A673 (cell line): ENCODE measurements at regions of chr9 and their contacts with region 1.

Region 1: GRCh38 chr9:97615439-97616072 is 17.6 kb downstream of the TSTD2 start:
- DNase-seq: peak; percentile 74
- H3K4me3 ChIP-seq: no peak overlapping the region
- H3K27ac ChIP-seq: no peak overlapping the region
- H3K4me1 ChIP-seq: no peaks in the 10 kb centered on the region
- H3K27me3 ChIP-seq: no peaks in the 10 kb centered on the region
- CTCF ChIP-seq: peak; percentile 82

Region 2: DNA sequence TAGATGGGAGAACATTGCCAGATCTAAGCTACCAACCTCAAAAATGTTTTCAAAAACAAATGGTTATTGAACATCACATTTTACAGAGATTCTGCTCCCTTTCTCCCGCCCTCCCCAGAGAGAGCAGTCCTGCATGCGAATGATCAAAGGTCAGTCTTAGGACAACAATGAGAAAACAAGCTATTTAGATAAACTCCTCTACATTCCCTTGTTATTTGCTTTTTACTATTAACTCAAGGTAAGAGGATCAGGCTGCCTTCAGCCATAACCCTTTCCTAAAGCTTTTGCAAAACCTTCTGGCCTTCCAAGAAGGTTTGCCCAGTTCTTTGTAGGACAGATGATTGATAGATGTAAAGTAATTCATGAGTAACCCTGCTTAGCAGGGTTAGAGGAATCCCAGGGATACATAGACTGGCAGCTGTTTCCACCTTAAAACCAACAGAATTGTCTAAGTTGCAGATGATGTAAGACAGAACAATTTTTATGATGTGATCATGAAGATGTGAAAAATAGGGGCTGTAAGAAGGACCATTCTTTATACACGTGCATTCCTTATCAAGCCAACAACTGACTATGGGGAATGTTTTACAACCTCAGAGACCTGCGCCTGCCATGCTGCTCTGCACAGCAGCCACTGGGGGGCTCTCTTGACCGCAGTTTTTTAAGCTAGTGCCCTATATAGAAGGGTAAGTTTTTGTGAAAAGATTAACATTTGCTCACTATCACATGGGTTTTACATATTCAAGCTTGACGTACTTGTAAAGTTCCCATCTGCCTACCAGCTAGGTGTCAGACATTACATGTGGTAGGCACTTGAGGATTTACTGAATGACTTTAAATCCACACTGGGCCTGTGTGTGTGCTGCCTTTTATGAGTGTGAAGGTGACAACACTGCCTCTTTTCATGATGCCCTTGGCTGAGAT is 758.9 kb before region 1 on chr9:
- CTCF ChIA-PET with region 1: interaction called, 7 read pairs
- POLR2A ChIA-PET with region 1: no interaction called
- intact Hi-C with region 1: loop called (anchors 5 kb)
- DNase-seq: peak; percentile 83
- H3K4me3 ChIP-seq: no peak overlapping the region
- H3K27ac ChIP-seq: no peak overlapping the region
- H3K4me1 ChIP-seq: peaks cover 1% of the 10 kb centered on the region
- H3K27me3 ChIP-seq: no peaks in the 10 kb centered on the region
- CTCF ChIP-seq: peak; percentile 96

Region 3: GRCh38 chr9:97386733-97387503 is 228.6 kb before region 1 on chr9:
- CTCF ChIA-PET with region 1: no interaction called
- POLR2A ChIA-PET with region 1: no interaction called
- intact Hi-C with region 1: loop called (anchors 2 kb)
- DNase-seq: peak; percentile 58
- H3K4me3 ChIP-seq: no peak overlapping the region
- H3K27ac ChIP-seq: no peak overlapping the region
- H3K4me1 ChIP-seq: no peaks in the 10 kb centered on the region
- H3K27me3 ChIP-seq: no peaks in the 10 kb centered on the region
- CTCF ChIP-seq: peak; percentile 98

Region 4: GRCh38 chr9:97411789-97412625 is 203.5 kb before region 1 on chr9 and contains the start of gene TDRD7:
- CTCF ChIA-PET with region 1: interaction called, 4 read pairs
- POLR2A ChIA-PET with region 1: no interaction called
- intact Hi-C with region 1: loop called (anchors 1 kb)
- DNase-seq: peak; percentile 87
- H3K4me3 ChIP-seq: peak within 1 kb of the TSS; percentile 82
- H3K27ac ChIP-seq: no peak within 1 kb of the TSS
- H3K4me1 ChIP-seq: no peaks in the 10 kb centered on the region
- H3K27me3 ChIP-seq: peaks cover 5% of the 10 kb centered on the region
- CTCF ChIP-seq: peak; percentile 93
- total RNA-seq, gene TDRD7: 3.6 and 4.9 TPM in 2 replicates

Region 5: GRCh38 chr9:97468658-97469448 is 146.7 kb before region 1 on chr9:
- CTCF ChIA-PET with region 1: no interaction called
- POLR2A ChIA-PET with region 1: no interaction called
- intact Hi-C with region 1: loop called (anchors 1 kb)
- DNase-seq: peak; percentile 60
- H3K4me3 ChIP-seq: no peak overlapping the region
- H3K27ac ChIP-seq: no peak overlapping the region
- H3K4me1 ChIP-seq: no peaks in the 10 kb centered on the region
- H3K27me3 ChIP-seq: no peaks in the 10 kb centered on the region
- CTCF ChIP-seq: peak; percentile 67

Region 6: DNA sequence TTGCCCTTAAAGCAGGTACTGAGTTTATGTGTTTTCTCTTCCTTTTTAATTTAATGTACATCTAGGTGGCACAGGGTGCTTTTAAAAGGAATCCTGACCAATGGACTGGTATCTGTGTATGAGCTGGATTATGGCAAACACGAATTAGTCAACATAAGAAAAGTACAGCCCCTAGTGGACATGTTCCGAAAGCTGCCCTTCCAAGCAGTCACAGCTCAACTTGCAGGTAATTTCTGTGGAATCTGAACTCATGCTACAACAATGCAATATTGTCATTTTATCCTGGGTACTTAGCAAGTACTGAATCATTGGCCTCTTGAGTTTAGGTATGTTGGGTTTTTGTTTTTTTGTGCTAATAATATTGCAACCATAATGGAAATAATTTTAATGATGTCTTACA is 128.4 kb before region 1 on chr9:
- CTCF ChIA-PET with region 1: interaction called, 10 read pairs
- POLR2A ChIA-PET with region 1: no interaction called
- intact Hi-C with region 1: no loop called
- DNase-seq: peak; percentile 14
- H3K4me3 ChIP-seq: no peak overlapping the region
- H3K27ac ChIP-seq: no peak overlapping the region
- H3K4me1 ChIP-seq: no peaks in the 10 kb centered on the region
- H3K27me3 ChIP-seq: no peaks in the 10 kb centered on the region
- CTCF ChIP-seq: peak; percentile 50

Region 7: DNA sequence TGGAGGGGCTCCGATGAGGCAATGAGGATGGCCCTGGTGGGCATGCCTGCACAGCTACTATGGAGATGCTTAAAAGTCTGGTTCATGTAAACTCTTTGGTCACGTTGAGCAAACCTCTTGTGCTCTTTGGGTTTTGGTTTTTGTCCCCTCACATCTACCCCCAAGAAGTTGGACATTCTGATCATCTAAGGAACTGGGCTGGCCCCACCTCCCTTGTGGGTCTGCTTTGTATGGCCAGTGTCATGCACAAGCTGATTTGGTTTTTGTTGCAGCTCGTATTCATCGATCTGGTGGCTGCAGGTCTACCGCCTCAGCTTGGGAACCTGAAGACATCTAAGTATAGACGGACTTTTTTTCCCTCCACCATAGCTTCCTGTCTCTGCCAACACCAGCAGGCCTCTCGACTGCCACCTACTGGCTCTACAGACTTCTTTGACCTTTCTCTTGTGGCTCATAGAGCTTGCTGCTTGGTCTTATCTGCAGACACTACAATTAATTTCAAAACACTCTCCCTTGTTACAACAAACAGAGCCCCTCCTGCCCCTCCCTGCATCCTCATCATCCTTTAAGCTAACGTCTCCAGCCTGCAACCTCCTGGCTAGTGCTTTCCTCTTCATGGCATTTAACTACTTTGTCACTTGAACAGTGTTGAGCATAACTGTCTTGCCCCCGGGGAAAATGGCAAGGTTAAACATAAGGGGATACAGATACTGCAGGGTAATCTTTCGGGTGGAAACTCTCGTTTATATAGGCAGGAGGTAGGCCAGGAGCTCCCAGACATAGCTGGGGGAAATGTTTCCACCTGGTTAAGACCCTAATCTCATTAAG is 16.9 kb before region 1 on chr9:
- CTCF ChIA-PET with region 1: interaction called, 14 read pairs
- POLR2A ChIA-PET with region 1: no interaction called
- intact Hi-C with region 1: no loop called
- DNase-seq: peak; percentile 81
- H3K4me3 ChIP-seq: no peak overlapping the region
- H3K27ac ChIP-seq: no peak overlapping the region
- H3K4me1 ChIP-seq: no peaks in the 10 kb centered on the region
- H3K27me3 ChIP-seq: no peaks in the 10 kb centered on the region
- CTCF ChIP-seq: peak; percentile 87

Region 8: DNA sequence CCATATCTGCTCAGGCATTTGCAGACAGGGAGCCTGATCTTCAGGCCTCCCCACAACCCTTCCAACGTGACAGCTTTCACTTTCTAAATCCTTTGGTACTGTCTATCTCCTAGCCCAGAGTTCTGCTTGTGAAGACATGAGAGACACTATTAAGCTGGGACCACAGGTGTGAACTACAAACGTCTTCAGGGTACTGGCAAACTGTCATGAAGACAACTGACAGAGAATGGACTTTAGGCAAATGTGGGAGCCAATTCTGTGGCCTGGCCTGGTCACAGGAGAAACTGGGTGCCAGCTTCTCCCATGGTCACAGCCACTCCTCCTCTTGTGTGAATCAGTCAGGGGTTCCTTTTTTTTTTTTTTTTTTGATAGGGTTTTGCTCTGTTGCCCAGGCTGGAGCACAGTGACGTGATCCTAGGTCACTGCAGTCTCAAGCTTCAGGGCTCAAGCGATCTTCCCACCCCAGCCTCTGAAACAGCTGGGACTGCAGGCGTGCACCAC is 493.0 kb after region 1 on chr9:
- CTCF ChIA-PET with region 1: no interaction called
- POLR2A ChIA-PET with region 1: no interaction called
- intact Hi-C with region 1: no loop called
- DNase-seq: no peak
- H3K4me3 ChIP-seq: no peak overlapping the region
- H3K27ac ChIP-seq: no peak overlapping the region
- H3K4me1 ChIP-seq: no peaks in the 10 kb centered on the region
- H3K27me3 ChIP-seq: no peaks in the 10 kb centered on the region
- CTCF ChIP-seq: no peak